ENCODE measurements at regions of chr3 and their contacts with region 1.

Region 1: GRCh38 chr3:123584988-123585937 is at the start of gene HACD2:
- DNase-seq: peak; percentile 89 to 98
- H3K4me3 ChIP-seq: peak within 1 kb of the TSS; percentile 72
- H3K27ac ChIP-seq: peak within 1 kb of the TSS; percentile 95
- H3K4me1 ChIP-seq: peaks cover 45% of the 10 kb centered on the region
- H3K27me3 ChIP-seq: no peaks in the 10 kb centered on the region
- CTCF ChIP-seq: no peak
- total RNA-seq, gene HACD2: 38.4 and 53.3 TPM in 2 replicates

Region 2: GRCh38 chr3:123499322-123499721 is 85.9 kb before region 1 on chr3:
- CTCF ChIA-PET with region 1: no interaction called
- POLR2A ChIA-PET with region 1: interaction called, 20 read pairs
- intact Hi-C with region 1: no loop called
- DNase-seq: no peak
- H3K4me3 ChIP-seq: no peak overlapping the region
- H3K27ac ChIP-seq: no peak overlapping the region
- H3K4me1 ChIP-seq: no peaks in the 10 kb centered on the region
- H3K27me3 ChIP-seq: no peaks in the 10 kb centered on the region
- CTCF ChIP-seq: no peak

Region 3: GRCh38 chr3:123605789-123606234 is 20.5 kb after region 1 on chr3:
- CTCF ChIA-PET with region 1: interaction called, 5 read pairs
- POLR2A ChIA-PET with region 1: interaction called, 12 read pairs
- intact Hi-C with region 1: loop called (anchors 1 kb)
- DNase-seq: peak; percentile 57 to 81
- H3K4me3 ChIP-seq: no peak overlapping the region
- H3K27ac ChIP-seq: peak overlapping the region; percentile 95
- H3K4me1 ChIP-seq: peaks cover 61% of the 10 kb centered on the region
- H3K27me3 ChIP-seq: no peaks in the 10 kb centered on the region
- CTCF ChIP-seq: no peak

Region 4: GRCh38 chr3:123642182-123642956 is 57.1 kb after region 1 on chr3:
- CTCF ChIA-PET with region 1: interaction called, 5 read pairs
- POLR2A ChIA-PET with region 1: no interaction called
- intact Hi-C with region 1: loop called (anchors 1 kb)
- DNase-seq: peak; percentile 77 to 78
- H3K4me3 ChIP-seq: no peak overlapping the region
- H3K27ac ChIP-seq: no peak overlapping the region
- H3K4me1 ChIP-seq: peaks cover 2% of the 10 kb centered on the region
- H3K27me3 ChIP-seq: no peaks in the 10 kb centered on the region
- CTCF ChIP-seq: peak; percentile 92

Region 5: DNA sequence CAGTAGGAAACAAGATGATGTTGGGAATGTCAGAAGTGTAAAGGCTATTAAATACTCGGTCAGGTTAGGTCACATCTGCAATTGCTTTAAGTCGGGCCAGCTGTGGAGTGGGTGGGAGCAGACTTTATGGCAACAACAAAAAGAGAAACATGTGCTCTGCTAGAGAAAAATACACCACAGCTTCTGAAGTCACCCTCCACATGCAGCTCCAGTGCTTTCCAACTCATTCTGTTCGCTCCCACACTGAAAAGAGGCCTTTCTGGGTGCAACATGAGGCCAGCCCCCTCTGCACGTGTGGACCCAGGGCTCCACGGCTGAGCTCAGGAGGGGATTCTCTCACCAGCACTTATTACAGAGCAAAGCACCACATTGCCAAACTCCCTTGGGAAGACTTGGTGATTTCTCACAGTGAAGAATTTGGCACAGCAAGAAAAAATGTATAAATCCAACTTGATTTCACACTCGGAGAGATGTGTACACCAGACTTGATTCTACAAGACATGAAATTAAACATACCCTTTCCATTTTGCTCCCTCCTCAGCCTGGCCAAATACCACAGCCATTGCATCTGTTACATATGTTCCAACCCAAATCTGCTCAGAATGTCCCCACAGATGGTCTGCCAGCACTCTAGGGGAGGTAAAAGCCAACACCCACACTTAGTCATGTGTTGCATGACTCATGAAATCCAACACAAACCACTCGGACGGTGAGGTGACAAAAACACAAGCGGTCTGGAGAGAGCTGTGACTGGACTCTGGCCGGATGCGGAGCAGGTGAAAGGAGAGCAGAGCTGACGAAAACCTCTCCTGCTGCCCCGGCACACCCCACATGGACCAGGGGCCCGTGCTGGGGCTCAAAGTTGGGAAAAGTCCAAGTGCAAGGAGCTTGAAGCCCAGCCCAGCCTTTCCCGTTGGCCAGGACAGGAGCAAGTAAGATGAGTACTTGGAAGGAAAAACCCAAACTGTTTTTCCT is 1227.3 kb after region 1 on chr3:
- CTCF ChIA-PET with region 1: no interaction called
- POLR2A ChIA-PET with region 1: no interaction called
- intact Hi-C with region 1: loop called (anchors 5 kb)
- DNase-seq: peak; percentile 92 to 95
- H3K4me3 ChIP-seq: peak overlapping the region; percentile 35; the same call in 1 of the 2 replicates
- H3K27ac ChIP-seq: peak overlapping the region; percentile 96
- H3K4me1 ChIP-seq: peaks cover 52% of the 10 kb centered on the region
- H3K27me3 ChIP-seq: no peaks in the 10 kb centered on the region
- CTCF ChIP-seq: no peak

Region 6: DNA sequence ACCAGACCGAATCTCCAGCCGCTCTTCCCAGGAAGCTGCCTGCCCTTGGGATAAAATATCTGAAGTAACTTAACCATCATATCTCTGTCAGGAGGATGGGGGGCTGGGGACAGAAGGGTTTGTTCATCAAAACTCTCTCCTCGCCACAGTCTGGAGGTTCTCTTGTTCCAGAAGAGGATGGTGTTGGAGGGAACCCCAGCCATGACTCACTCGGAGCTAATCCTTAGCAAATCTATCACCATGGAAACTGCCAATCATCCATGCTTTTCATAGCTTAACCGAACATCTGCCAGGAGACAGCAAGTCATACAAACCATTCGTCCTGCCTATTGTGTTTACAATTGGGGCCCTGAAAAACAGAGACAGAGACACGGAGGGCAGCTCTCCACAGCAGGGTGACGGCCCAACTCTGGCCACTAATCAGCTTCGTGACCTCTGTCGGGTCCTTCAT is 1544.3 kb after region 1 on chr3:
- CTCF ChIA-PET with region 1: no interaction called
- POLR2A ChIA-PET with region 1: no interaction called
- intact Hi-C with region 1: no loop called
- DNase-seq: peak; percentile 72 to 81
- H3K4me3 ChIP-seq: no peak overlapping the region
- H3K27ac ChIP-seq: peak overlapping the region; percentile 87
- H3K4me1 ChIP-seq: peaks cover 53% of the 10 kb centered on the region
- H3K27me3 ChIP-seq: no peaks in the 10 kb centered on the region
- CTCF ChIP-seq: no peak